Activated T-helper 2 cell treated with anti-CD3 and anti-CD28 coated beads, Interferon-gamma antibody, Interleukin-2, Interleukin-4, amounts not matched to agents 10 μg/mL and 5 μg/mL and 100 μg/mL, durations not matched to agents 14 hours and 24 hours and 36 hours (primary cell): ENCODE measurements at regions of chr3 and their contacts with region 1.

Region 1: GRCh38 chr3:71583566-71584449 is at the start of gene FOXP1:
- DNase-seq: peak; percentile 57
- H3K4me3 Mint-ChIP-seq: peak within 1 kb of the TSS; percentile 91
- H3K27ac Mint-ChIP-seq: peak within 1 kb of the TSS; percentile 95
- H3K4me1 Mint-ChIP-seq: peaks cover 52% of the 10 kb centered on the region
- H3K27me3 Mint-ChIP-seq: no peaks in the 10 kb centered on the region
- total RNA-seq, gene FOXP1: 132 and 138 TPM in 2 replicates

Region 2: GRCh38 chr3:71064288-71064955 is 519.4 kb before region 1 on chr3:
- intact Hi-C with region 1: loop called (anchors 1 kb)
- DNase-seq: peak; percentile 68
- H3K4me3 Mint-ChIP-seq: no peak overlapping the region
- H3K27ac Mint-ChIP-seq: no peak overlapping the region
- H3K4me1 Mint-ChIP-seq: peaks cover 58% of the 10 kb centered on the region
- H3K27me3 Mint-ChIP-seq: no peaks in the 10 kb centered on the region

Region 3: DNA sequence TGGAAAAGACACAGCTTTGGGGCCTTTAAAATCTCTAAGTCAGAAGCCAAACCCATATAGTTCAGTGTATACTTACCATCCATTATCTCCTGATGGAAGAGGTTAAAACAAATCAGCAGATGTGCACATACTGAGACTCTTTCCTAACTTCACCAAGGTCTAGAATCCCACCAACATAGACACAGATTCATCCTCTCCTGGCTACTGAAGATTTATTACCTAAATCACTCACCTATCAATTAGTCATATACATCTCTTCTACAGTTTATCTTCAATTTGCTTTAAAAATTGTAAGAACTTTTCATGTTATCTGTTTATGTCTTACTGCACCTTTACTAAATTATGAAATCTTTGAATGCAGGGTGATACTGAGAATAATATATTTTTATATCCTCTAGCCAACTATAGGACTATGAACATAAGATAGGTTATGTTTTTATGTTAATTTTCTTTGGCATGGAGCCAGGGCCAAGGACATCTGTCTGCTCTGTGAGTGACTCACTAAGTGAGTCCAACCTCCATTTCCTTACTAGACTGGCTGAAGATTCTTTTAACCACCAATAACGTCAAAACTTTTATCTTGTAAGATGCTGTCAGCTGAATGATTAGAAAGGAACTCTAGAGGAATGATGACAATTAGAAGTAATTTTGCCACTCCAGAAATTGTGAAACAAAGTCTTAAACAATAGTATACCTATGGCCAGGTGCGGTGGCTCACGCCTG is 397.9 kb before region 1 on chr3:
- intact Hi-C with region 1: loop called (anchors 5 kb)
- DNase-seq: no peak
- H3K4me3 Mint-ChIP-seq: no peak overlapping the region
- H3K27ac Mint-ChIP-seq: peak overlapping the region; percentile 35
- H3K4me1 Mint-ChIP-seq: peaks cover 48% of the 10 kb centered on the region
- H3K27me3 Mint-ChIP-seq: no peaks in the 10 kb centered on the region

Region 4: DNA sequence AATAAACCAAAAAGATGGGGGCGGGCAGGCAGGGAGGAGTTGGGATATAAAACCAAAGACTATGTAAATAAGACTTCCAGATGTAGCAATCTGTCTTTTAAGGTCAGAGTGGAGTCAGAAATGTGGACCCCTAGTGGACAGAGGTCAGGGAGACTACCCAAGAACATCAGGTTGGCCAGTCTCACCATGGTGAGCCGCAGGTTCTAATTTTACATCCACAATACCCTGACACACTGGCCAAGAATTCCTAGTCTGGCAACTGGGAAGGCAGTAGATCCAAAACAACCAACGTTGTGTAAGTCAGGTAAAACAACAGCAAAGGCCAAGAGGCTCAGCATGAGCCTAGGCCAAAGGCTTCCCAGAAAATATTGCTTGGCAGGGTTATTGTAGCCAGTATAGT is 203.7 kb before region 1 on chr3:
- intact Hi-C with region 1: loop called (anchors 5 kb)
- DNase-seq: no peak
- H3K4me3 Mint-ChIP-seq: no peak overlapping the region
- H3K27ac Mint-ChIP-seq: peak overlapping the region; percentile 68
- H3K4me1 Mint-ChIP-seq: peaks cover 56% of the 10 kb centered on the region
- H3K27me3 Mint-ChIP-seq: no peaks in the 10 kb centered on the region

Region 5: GRCh38 chr3:71495708-71496472 is 87.9 kb before region 1 on chr3:
- intact Hi-C with region 1: loop called (anchors 2 kb)
- DNase-seq: no peak
- H3K4me3 Mint-ChIP-seq: peak overlapping the region; percentile 66
- H3K27ac Mint-ChIP-seq: peak overlapping the region; percentile 92
- H3K4me1 Mint-ChIP-seq: peaks cover 68% of the 10 kb centered on the region
- H3K27me3 Mint-ChIP-seq: no peaks in the 10 kb centered on the region

Region 6: DNA sequence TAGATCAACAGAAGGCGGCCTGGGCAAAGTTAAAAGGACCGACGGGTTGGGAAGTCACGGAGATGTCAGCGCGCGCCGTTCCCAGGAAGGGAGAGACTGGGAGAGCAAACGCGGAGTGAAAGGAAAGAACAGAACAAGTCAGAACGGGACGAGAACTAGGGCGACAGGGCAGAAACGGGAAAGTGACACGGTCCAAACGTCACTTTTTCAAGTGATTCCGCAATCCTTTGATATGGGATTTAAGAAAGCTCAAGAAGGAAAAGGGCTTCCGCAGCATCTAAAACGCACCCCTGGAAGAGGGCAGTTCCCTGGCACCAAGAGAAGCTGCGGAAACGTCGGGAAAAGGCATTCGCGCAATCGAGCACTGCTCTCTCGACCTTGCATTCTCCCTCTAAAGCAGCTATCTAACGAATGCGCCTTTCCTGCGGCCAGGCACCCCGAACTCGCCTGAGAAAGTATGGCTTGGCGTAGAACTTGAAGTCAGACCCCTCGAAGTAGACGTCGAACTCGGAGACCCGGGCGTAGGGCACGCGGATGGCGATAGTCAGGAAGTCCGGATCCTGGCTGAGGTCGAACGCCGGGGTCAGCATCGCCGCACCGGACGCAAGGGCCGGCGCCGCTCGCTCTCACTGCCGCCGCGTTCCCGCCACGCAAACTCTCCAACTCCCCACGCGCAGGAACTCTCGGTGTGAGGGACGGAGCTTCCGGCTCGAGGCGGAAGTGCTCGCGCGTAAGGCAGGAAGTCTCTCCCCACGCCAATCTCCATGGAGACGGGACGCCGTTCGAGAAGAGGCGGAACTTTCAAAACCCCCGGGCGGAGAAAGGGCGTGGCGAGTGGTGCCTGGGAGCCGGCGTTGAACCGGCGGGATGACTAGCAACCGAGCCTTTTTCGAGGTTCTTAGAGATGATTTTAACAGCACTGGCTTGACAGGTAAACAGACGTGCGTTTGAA is 1264.2 kb after region 1 on chr3 and contains the start of gene SHQ1:
- intact Hi-C with region 1: loop called (anchors 5 kb)
- DNase-seq: peak; percentile 91
- H3K4me3 Mint-ChIP-seq: peak within 1 kb of the TSS; percentile 99
- H3K27ac Mint-ChIP-seq: peak within 1 kb of the TSS; percentile 77
- H3K4me1 Mint-ChIP-seq: peaks cover 54% of the 10 kb centered on the region
- H3K27me3 Mint-ChIP-seq: no peaks in the 10 kb centered on the region
- total RNA-seq, gene SHQ1: 29.0 and 31.2 TPM in 2 replicates